Uterus (tissue), 4 donors: ENCODE measurements at regions of chr9 and their contacts with region 1.

Region 1: DNA sequence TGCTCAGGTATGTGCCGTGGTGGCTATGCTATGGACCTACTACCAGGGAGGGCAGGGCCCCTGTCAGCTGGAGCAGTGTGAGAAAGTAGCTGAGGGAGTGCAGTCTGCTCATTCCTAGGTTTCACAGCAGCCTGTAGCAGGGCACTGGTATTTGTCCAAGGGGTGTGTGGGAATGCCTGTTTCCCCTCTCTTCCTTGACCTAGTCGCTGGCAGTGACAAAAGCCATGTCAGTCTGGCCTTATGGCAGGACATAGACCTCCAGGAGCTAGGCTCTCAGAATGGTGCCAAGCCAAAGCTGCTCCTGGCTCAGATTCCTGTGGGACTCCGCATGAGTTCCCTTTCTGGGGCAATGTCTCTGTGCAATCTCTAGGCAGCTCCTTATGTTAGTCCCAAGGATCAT is 253.9 kb upstream of the TYRP1 start:
- DNase-seq: no peak
- H3K4me3 ChIP-seq: no peak overlapping the region
- H3K27ac ChIP-seq: no peak overlapping the region
- H3K4me1 ChIP-seq: no peaks in the 10 kb centered on the region
- H3K27me3 ChIP-seq: no peaks in the 10 kb centered on the region
- CTCF ChIP-seq: no peak
- POLR2A ChIP-seq: no peak

Region 2: DNA sequence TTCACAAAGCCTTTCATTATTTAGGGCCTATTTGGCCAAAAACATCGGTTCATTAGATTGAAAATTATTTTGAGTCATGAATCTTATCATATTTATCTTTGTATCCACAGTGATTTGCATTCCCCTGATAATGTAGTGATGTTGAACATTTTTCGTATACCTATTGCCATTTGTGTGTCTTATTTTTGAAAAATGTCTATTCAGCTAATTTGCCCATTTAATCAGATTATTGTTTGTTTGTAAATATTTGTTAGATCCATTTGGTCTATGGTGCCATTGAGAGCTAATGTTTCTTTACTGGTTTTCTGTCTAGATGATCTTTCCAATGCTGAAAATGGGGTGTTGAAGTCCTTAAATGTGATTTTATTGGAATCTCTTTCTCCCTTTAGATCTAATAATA is 185.3 kb before region 1 on chr9:
- intact Hi-C with region 1: no loop called
- DNase-seq: no peak
- H3K4me3 ChIP-seq: no peak overlapping the region
- H3K27ac ChIP-seq: no peak overlapping the region
- H3K4me1 ChIP-seq: no peaks in the 10 kb centered on the region
- H3K27me3 ChIP-seq: no peaks in the 10 kb centered on the region
- CTCF ChIP-seq: no peak
- POLR2A ChIP-seq: no peak

Region 3: GRCh38 chr9:12368569-12368968 is 70.7 kb before region 1 on chr9:
- intact Hi-C with region 1: loop called (anchors 10 kb)
- DNase-seq: no peak
- H3K4me3 ChIP-seq: no peak overlapping the region
- H3K27ac ChIP-seq: no peak overlapping the region
- H3K4me1 ChIP-seq: no peaks in the 10 kb centered on the region
- H3K27me3 ChIP-seq: no peaks in the 10 kb centered on the region
- CTCF ChIP-seq: no peak
- POLR2A ChIP-seq: no peak

Region 4: DNA sequence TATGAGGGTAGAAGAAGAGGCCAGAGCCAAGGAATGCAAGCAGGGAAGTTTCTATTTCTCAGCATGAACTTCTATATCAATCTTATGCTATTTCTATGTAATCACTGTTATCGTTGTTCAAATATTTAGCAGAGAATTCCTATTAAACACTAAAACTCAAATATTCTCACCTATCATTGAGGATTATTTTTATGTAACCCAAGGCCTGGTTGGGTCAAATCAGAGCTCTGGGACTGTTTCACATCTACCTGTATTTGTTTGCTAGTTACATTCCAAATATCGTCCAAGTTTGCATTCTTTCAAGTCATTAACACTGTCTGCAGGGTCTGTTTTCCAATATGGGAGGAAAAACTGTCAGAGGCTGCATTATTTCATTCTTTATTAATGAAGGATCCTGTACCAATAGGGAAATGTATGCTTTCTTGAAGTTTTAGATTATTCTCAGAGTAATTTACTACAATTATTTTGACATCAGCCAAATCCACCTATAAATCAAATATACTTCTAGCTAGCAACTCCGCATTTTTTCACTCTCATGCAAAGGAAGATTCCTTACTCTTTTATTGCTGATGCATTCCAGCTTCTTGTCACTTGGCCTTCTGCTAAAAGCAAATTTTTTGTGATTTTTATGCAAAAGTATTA is 387.8 kb after region 1 on chr9:
- intact Hi-C with region 1: no loop called
- DNase-seq: no peak
- H3K4me3 ChIP-seq: no peak overlapping the region
- H3K27ac ChIP-seq: peak overlapping the region in 1 of 2 donors; percentile 26
- H3K4me1 ChIP-seq: no peaks in the 10 kb centered on the region
- H3K27me3 ChIP-seq: no peaks in the 10 kb centered on the region
- CTCF ChIP-seq: no peak
- POLR2A ChIP-seq: no peak